ENCODE measurements at regions of chr1 and their contacts with region 1.

Region 1: GRCh38 chr1:203795441-203796235 is at the starts of genes ZBED6 and ZC3H11A:
- DNase-seq: peak; percentile 99
- ATAC-seq: peak; percentile 98
- H3K4me3 ChIP-seq: peak within 1 kb of the TSS; percentile 62 to 86 (median 78)
- H3K4me3 Mint-ChIP-seq: peak within 1 kb of the TSS; percentile 88
- H3K27ac ChIP-seq: peak within 1 kb of the TSS; percentile 85 to 94
- H3K27ac Mint-ChIP-seq: peak within 1 kb of the TSS; percentile 97
- H3K4me1 ChIP-seq: peaks cover 37% of the 10 kb centered on the region in 2 donors
- H3K4me1 Mint-ChIP-seq: peaks cover 49% of the 10 kb centered on the region
- H3K27me3 ChIP-seq: no peaks in the 10 kb centered on the region
- H3K27me3 Mint-ChIP-seq: no peaks in the 10 kb centered on the region
- CTCF ChIP-seq: no peak
- total RNA-seq, gene ZBED6: 39.7 and 40.0 TPM in 2 replicates
- total RNA-seq, gene ZC3H11A: 117 and 130 TPM in 2 replicates

Region 2: DNA sequence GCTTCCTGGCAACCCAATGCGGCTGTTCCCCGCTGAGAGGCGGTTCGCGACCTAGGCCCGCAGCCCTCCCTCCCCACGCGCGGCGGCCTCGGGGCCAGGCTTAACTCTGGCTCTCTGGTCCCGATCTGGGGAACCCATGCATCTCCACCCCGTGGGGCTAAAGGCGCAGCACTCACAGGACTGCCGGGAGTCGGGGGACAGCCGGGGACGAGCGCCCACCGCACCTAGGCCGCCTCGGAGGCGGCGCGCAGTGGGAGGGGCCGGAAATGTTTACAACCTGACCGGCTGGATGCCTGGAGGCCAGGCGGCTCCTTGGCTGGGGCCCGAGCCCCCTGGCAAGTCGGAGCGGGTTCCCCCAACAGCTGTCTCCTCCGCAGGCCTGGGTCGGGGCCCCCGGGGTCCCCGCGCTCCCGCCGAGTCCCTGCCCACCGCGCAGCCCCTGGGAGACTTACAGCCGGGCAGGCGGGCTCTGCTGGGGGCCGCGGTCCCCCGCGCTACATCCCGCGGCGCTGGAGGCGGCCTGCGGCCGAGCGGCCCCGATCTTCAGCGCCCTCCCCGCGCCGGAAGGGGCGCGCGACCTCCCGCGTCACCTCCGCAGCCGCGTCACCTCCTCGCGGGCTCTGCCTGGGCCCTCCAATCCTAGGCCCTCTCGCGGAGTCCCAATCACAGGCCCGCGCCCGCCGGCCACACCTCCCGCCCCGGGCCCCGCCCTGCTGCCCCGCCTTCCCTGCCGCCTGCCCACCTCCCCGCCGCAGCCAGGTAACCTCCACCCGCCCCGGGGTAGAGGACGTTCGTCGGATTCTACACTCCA is 837.7 kb before region 1 on chr1 and contains the start of gene ADIPOR1:
- CTCF ChIA-PET with region 1: no interaction called
- POLR2A ChIA-PET with region 1: no interaction called
- intact Hi-C with region 1: loop called (anchors 10 kb)
- DNase-seq: peak; percentile 92
- ATAC-seq: peak; percentile 98
- H3K4me3 ChIP-seq: peak within 1 kb of the TSS; percentile 79 to 93 (median 87)
- H3K4me3 Mint-ChIP-seq: peak within 1 kb of the TSS; percentile 90
- H3K27ac ChIP-seq: peak within 1 kb of the TSS; percentile 79 to 95
- H3K27ac Mint-ChIP-seq: peak within 1 kb of the TSS; percentile 86
- H3K4me1 ChIP-seq: peaks cover 25 to 27% of the 10 kb centered on the region in 2 donors
- H3K4me1 Mint-ChIP-seq: peaks cover 40% of the 10 kb centered on the region
- H3K27me3 ChIP-seq: no peaks in the 10 kb centered on the region
- H3K27me3 Mint-ChIP-seq: no peaks in the 10 kb centered on the region
- CTCF ChIP-seq: no peak
- total RNA-seq, gene ADIPOR1: 44.2 and 46.6 TPM in 2 replicates

Region 3: GRCh38 chr1:203026031-203026989 is 769.3 kb before region 1 on chr1 and contains the start of gene PPFIA4:
- CTCF ChIA-PET with region 1: no interaction called
- POLR2A ChIA-PET with region 1: no interaction called
- intact Hi-C with region 1: loop called (anchors 10 kb)
- DNase-seq: peak; percentile 90
- ATAC-seq: peak; percentile 96
- H3K4me3 ChIP-seq: peak within 1 kb of the TSS; percentile 53 to 68 (median 65)
- H3K4me3 Mint-ChIP-seq: peak within 1 kb of the TSS; percentile 84
- H3K27ac ChIP-seq: peak within 1 kb of the TSS in 1 of 2 donors; percentile 48
- H3K27ac Mint-ChIP-seq: peak within 1 kb of the TSS; percentile 62
- H3K4me1 ChIP-seq: peaks cover 10 to 16% of the 10 kb centered on the region in 2 donors
- H3K4me1 Mint-ChIP-seq: peaks cover 16% of the 10 kb centered on the region
- H3K27me3 ChIP-seq: peaks cover 0 to 16% (median 5%) of the 10 kb centered on the region in 4 experiments
- H3K27me3 Mint-ChIP-seq: peaks cover 7% of the 10 kb centered on the region
- CTCF ChIP-seq: no peak
- total RNA-seq, gene PPFIA4: 0.62 and 0.75 TPM in 2 replicates

Region 4: GRCh38 chr1:203649999-203650855 is 145.4 kb before region 1 on chr1:
- CTCF ChIA-PET with region 1: no interaction called
- POLR2A ChIA-PET with region 1: no interaction called
- intact Hi-C with region 1: loop called (anchors 1 kb)
- DNase-seq: peak; percentile 68
- ATAC-seq: peak; percentile 86
- H3K4me3 ChIP-seq: peak overlapping the region in 4 of 5 experiments; percentile 37 to 61 (median 44)
- H3K4me3 Mint-ChIP-seq: peak overlapping the region; percentile 87
- H3K27ac ChIP-seq: peak overlapping the region; percentile 59
- H3K27ac Mint-ChIP-seq: peak overlapping the region; percentile 91
- H3K4me1 ChIP-seq: peaks cover 21 to 36% of the 10 kb centered on the region in 2 donors
- H3K4me1 Mint-ChIP-seq: peaks cover 35% of the 10 kb centered on the region
- H3K27me3 ChIP-seq: peaks cover 0 to 5% (median 0%) of the 10 kb centered on the region in 4 experiments
- H3K27me3 Mint-ChIP-seq: no peaks in the 10 kb centered on the region
- CTCF ChIP-seq: no peak

Region 5: DNA sequence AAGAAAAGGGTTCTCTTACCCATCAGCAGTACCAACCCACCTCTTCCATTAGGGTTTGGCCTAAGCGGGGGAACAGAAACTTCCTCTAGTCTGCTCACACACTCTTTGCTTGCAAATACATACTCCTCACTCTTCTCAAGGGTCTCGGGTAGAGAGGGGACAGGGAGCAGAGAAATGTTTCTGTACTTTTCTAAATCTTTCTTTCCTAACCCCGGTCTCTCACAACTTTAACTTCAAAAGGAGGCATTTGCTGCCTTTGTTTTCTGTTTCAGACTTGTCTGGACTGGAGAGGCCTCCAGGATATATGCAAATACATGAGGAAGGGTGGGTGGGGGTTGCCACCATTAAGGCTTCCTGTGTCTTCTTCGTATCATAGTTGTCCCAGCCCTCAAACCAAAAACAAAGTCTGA is 41.2 kb before region 1 on chr1:
- CTCF ChIA-PET with region 1: no interaction called
- POLR2A ChIA-PET with region 1: no interaction called
- intact Hi-C with region 1: loop called (anchors 1 kb)
- DNase-seq: peak; percentile 76
- ATAC-seq: peak; percentile 68
- H3K4me3 ChIP-seq: peak overlapping the region in 4 of 5 experiments; percentile 0 to 33 (median 20)
- H3K4me3 Mint-ChIP-seq: peak overlapping the region; percentile 67
- H3K27ac ChIP-seq: peak overlapping the region; percentile 85
- H3K27ac Mint-ChIP-seq: peak overlapping the region; percentile 96
- H3K4me1 ChIP-seq: peaks cover 35 to 41% of the 10 kb centered on the region in 2 donors
- H3K4me1 Mint-ChIP-seq: peaks cover 41% of the 10 kb centered on the region
- H3K27me3 ChIP-seq: no peaks in the 10 kb centered on the region
- H3K27me3 Mint-ChIP-seq: no peaks in the 10 kb centered on the region
- CTCF ChIP-seq: no peak

Region 6: GRCh38 chr1:204065174-204065985 is 269.7 kb after region 1 on chr1:
- CTCF ChIA-PET with region 1: no interaction called
- POLR2A ChIA-PET with region 1: no interaction called
- intact Hi-C with region 1: no loop called
- DNase-seq: no peak
- ATAC-seq: no peak
- H3K4me3 ChIP-seq: no peak overlapping the region
- H3K4me3 Mint-ChIP-seq: no peak overlapping the region
- H3K27ac ChIP-seq: no peak overlapping the region
- H3K27ac Mint-ChIP-seq: no peak overlapping the region
- H3K4me1 ChIP-seq: no peaks in the 10 kb centered on the region
- H3K4me1 Mint-ChIP-seq: no peaks in the 10 kb centered on the region
- H3K27me3 ChIP-seq: peaks cover 0 to 3% (median 0%) of the 10 kb centered on the region in 4 experiments
- H3K27me3 Mint-ChIP-seq: peaks cover 31% of the 10 kb centered on the region
- CTCF ChIP-seq: no peak

Measured in B cell (primary cell).